Naive thymus-derived CD4-positive, alpha-beta T cell (primary cell): ENCODE measurements at regions of chr6 and their contacts with region 1.

Region 1: DNA sequence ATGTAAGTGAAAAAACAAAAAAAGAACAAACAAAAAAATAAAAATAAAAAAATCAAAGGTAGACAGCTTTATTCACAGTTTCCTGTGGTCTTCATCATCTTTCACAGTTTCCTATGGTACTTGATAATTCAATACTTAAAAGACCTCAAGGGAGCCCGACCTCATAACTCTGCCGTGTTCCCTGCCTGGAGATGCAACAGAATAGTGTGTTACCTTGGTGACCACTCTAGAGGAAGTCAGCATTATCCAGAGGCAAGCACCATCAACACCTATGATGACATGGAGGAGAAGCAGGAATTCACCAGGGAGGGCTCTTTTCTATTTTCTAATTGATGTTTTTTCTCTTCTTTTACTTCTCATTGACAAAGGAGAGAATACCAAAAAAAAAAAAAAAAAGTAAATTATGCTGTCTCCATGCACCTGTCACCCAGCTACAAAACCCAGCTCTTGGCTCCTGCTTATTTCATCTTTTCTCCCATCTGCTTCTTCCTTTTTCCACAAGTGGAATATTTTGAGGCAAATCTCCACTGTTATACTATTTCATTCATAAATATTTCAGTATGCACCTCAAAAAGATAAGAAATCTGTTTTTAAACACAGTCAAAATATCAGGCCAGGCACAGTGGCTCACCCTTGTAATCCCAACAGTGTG is 95.8 kb upstream of the STXBP5 start:
- DNase-seq: peak in 1 of 9 donors; percentile 15
- ATAC-seq: no peak
- H3K4me3 ChIP-seq: no peak overlapping the region
- H3K4me3 Mint-ChIP-seq: peak overlapping the region in 5 of 10 donors; percentile 32 to 89 (median 57)
- H3K27ac ChIP-seq: no peak overlapping the region
- H3K27ac Mint-ChIP-seq: peak overlapping the region in 7 of 9 donors; percentile 31 to 91 (median 66)
- H3K4me1 ChIP-seq: peaks cover 23 to 47% of the 10 kb centered on the region in 2 donors
- H3K4me1 Mint-ChIP-seq: peaks cover 32 to 78% (median 63%) of the 10 kb centered on the region in 7 donors
- H3K27me3 ChIP-seq: no peaks in the 10 kb centered on the region
- H3K27me3 Mint-ChIP-seq: no peaks in the 10 kb centered on the region

Region 2: DNA sequence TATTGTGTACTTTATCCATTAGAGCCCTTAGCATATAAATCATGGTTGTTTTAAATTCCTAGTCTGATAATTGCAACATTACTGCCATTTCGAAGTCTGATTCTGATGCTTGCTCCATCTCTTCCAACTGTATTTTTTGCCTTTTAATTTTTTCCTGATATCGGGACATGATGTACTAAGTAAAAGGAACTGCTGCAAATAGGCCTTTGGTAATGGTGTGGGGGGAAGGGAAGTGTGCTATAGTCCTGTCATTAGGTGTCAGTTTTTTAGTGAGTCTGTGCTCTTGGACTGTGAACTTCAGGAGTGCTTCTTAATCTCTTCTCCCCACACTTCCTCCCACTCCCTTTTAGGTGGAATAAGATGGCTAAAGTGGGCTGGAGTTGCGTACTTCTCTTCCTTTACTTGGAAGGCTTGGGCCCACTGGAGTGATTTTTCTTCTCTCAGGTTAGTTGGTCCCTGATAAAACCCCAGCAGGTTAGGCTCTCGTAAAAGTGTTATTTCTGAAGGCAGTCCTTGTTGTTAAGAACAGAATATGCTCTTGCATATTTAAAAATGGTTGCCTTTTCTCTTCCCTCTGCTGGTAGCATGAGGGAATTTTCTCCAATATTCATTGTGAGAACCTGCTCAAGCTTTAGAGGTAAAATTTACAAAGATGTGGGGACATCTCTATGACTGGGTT is 113.9 kb after region 1 on chr6:
- CTCF ChIA-PET with region 1: no interaction called
- POLR2A ChIA-PET with region 1: no interaction called
- intact Hi-C with region 1: loop called in 1 of 2 experiments (anchors 1 kb)
- DNase-seq: peak in 6 of 9 donors; percentile 21 to 45 (median 36)
- ATAC-seq: peak; percentile 61
- H3K4me3 ChIP-seq: no peak overlapping the region
- H3K4me3 Mint-ChIP-seq: peak overlapping the region in 2 of 10 donors; percentile 29 to 35
- H3K27ac ChIP-seq: no peak overlapping the region
- H3K27ac Mint-ChIP-seq: peak overlapping the region in 6 of 9 donors; percentile 11 to 64 (median 42)
- H3K4me1 ChIP-seq: peaks cover 0 to 5% of the 10 kb centered on the region in 2 donors
- H3K4me1 Mint-ChIP-seq: peaks cover 16 to 74% (median 65%) of the 10 kb centered on the region in 7 donors
- H3K27me3 ChIP-seq: no peaks in the 10 kb centered on the region
- H3K27me3 Mint-ChIP-seq: no peaks in the 10 kb centered on the region